ENCODE measurements at regions of chr16 and their contacts with region 1.

Region 1: GRCh38 chr16:22098405-22099255 is 6.3 kb downstream of the VWA3A start:
- DNase-seq: peak; percentile 42
- H3K4me3 ChIP-seq: peak overlapping the region in 1 of 3 experiments; percentile 15
- H3K27ac ChIP-seq: no peak overlapping the region
- H3K4me1 ChIP-seq: no peaks in the 10 kb centered on the region
- H3K27me3 ChIP-seq: no peaks in the 10 kb centered on the region
- CTCF ChIP-seq: peak; percentile 77 to 84

Region 2: GRCh38 chr16:21952793-21953540 is 145.7 kb before region 1 on chr16 and contains the start of gene UQCRC2:
- CTCF ChIA-PET with region 1: interaction called, 9 read pairs
- dilution Hi-C with region 1: no loop called
- in situ Hi-C with region 1: no loop called
- intact Hi-C with region 1: loop called (anchors 1 kb)
- DNase-seq: peak; percentile 93
- H3K4me3 ChIP-seq: peak within 1 kb of the TSS; percentile 83 to 99 (median 96)
- H3K27ac ChIP-seq: peak within 1 kb of the TSS; percentile 99
- H3K4me1 ChIP-seq: peaks cover 23% of the 10 kb centered on the region
- H3K27me3 ChIP-seq: no peaks in the 10 kb centered on the region
- CTCF ChIP-seq: no peak
- total RNA-seq, gene UQCRC2: 181 to 205 TPM

Region 3: DNA sequence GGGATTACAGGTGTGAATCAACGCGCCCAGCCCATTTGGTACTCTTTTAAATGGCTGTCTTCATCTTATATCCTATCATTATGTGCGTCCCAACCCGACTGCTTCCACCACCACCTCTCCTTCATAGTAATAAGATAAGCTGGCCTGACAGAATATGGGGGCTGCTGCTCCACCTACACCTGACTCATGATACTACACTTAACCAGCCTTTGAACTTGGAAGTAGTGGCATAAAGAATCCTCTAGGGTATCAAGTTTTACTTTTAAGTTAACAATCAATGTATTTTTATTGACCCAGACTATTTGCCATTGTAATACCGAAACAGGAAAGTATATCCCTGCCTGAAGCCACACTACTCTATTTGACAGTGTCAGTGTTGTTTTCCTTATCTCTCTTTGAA is 116.5 kb before region 1 on chr16:
- CTCF ChIA-PET with region 1: interaction called, 20 read pairs
- dilution Hi-C with region 1: no loop called
- in situ Hi-C with region 1: no loop called
- intact Hi-C with region 1: no loop called
- DNase-seq: no peak
- H3K4me3 ChIP-seq: no peak overlapping the region
- H3K27ac ChIP-seq: no peak overlapping the region
- H3K4me1 ChIP-seq: peaks cover 3% of the 10 kb centered on the region
- H3K27me3 ChIP-seq: no peaks in the 10 kb centered on the region
- CTCF ChIP-seq: no peak

Measured in mammary epithelial cell (primary cell).